OCI-LY7 (cell line): ENCODE measurements at regions of chr19 and their contacts with region 1.

Region 1: DNA sequence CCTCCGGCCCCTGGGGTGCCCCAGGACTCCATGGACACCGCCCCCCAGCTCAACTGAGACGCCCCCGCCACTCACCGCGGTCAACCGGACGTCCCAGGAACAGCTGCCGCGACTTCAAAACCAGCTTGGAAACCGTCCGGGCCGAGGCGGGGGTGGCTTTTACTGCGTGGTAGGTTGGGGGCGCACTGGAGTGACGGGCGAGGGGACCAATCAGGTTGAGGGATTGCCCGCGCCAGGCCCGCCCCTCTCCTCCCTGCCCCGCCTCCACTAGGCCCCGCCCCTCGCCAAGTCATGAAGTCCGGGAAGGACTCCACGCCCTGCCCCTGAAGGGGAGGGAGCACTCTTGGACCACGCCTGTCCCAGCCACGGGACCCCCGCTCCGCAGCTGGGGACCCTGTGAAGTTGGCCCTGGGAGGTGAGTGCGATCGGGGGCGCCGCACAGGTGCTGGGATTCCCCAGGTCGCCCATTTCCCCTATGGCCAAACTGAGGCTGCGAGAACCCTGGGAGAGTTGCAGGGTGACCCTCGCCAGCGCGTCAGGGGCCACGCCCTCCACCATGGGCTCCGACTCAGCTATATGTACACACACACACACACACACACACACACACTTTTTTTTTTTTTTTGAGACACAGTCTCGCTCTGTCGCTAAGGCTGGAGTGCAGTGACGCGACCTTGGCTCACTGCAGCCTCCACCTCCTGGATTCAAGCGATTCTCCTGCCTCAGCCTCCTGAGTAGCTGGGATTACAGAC is at the start of gene PLIN3:
- DNase-seq: peak; percentile 95
- H3K4me3 ChIP-seq: peak within 1 kb of the TSS; percentile 78
- H3K27ac ChIP-seq: peak within 1 kb of the TSS; percentile 63
- H3K4me1 ChIP-seq: peaks cover 51% of the 10 kb centered on the region
- CTCF ChIP-seq: no peak
- total RNA-seq, gene PLIN3: 81.3 and 95.7 TPM in 2 replicates

Region 2: GRCh38 chr19:4744451-4745174 is 123.1 kb before region 1 on chr19:
- CTCF ChIA-PET with region 1: no interaction called
- POLR2A ChIA-PET with region 1: no interaction called
- intact Hi-C with region 1: no loop called
- DNase-seq: no peak
- H3K4me3 ChIP-seq: no peak overlapping the region
- H3K27ac ChIP-seq: no peak overlapping the region
- H3K4me1 ChIP-seq: peaks cover 9% of the 10 kb centered on the region
- CTCF ChIP-seq: no peak

Region 3: GRCh38 chr19:4911786-4912672 is 44.3 kb after region 1 on chr19:
- CTCF ChIA-PET with region 1: interaction called, 3 read pairs
- POLR2A ChIA-PET with region 1: interaction called, 11 read pairs
- intact Hi-C with region 1: loop called (anchors 1 kb)
- DNase-seq: peak; percentile 75
- H3K4me3 ChIP-seq: peak overlapping the region; percentile 97
- H3K27ac ChIP-seq: peak overlapping the region; percentile 80
- H3K4me1 ChIP-seq: peaks cover 29% of the 10 kb centered on the region
- CTCF ChIP-seq: peak; percentile 84

Region 4: GRCh38 chr19:4968462-4969291 is 101.0 kb after region 1 on chr19 and contains the start of gene KDM4B:
- CTCF ChIA-PET with region 1: no interaction called
- POLR2A ChIA-PET with region 1: no interaction called
- intact Hi-C with region 1: loop called (anchors 10 kb)
- DNase-seq: peak; percentile 99
- H3K4me3 ChIP-seq: peak within 1 kb of the TSS; percentile 85
- H3K27ac ChIP-seq: peak within 1 kb of the TSS; percentile 17
- H3K4me1 ChIP-seq: peaks cover 34% of the 10 kb centered on the region
- CTCF ChIP-seq: no peak
- total RNA-seq, gene KDM4B: 14.2 and 24.3 TPM in 2 replicates